CD4-positive, alpha-beta memory T cell (primary cell): ENCODE measurements at regions of chr1 and their contacts with region 1.

Region 1: DNA sequence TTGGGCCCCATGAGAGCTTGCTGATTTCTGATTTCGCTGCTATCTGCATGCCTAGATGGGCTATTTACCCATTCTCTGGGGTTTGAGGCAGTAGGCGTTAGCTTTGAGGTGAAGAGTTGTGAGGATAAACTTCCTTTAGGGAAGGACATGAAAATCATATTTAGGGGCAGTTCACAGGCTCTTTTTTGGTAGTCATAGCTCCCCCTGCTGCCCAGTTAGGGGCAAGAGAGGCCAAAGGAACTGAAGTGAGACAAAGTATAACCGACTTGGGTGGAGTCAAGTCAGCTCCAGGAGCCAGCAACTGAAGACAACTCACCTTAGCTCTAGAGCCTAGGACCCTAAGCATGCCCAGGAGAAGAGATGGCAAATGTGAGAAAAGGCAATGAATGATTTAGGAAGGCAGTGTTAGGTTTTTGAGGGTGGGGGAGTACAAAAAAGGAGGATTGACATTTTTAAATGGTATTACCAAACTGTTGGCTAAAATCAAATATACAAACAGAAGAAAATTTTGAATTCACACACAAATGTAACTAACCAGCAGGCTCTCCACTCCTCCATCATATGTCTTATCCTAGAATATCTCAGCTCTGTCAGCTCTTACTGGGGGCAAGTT is 625.2 kb downstream of the LMO4 start:
- DNase-seq: peak in 4 of 5 donors; percentile 49 to 55 (median 51)
- H3K4me3 ChIP-seq: no peak overlapping the region
- H3K4me3 Mint-ChIP-seq: no peak overlapping the region
- H3K27ac ChIP-seq: no peak overlapping the region
- H3K27ac Mint-ChIP-seq: no peak overlapping the region
- H3K4me1 ChIP-seq: no peaks in the 10 kb centered on the region
- H3K4me1 Mint-ChIP-seq: no peaks in the 10 kb centered on the region
- H3K27me3 ChIP-seq: no peaks in the 10 kb centered on the region
- H3K27me3 Mint-ChIP-seq: peaks cover 13 to 20% of the 10 kb centered on the region in 2 donors

Region 2: DNA sequence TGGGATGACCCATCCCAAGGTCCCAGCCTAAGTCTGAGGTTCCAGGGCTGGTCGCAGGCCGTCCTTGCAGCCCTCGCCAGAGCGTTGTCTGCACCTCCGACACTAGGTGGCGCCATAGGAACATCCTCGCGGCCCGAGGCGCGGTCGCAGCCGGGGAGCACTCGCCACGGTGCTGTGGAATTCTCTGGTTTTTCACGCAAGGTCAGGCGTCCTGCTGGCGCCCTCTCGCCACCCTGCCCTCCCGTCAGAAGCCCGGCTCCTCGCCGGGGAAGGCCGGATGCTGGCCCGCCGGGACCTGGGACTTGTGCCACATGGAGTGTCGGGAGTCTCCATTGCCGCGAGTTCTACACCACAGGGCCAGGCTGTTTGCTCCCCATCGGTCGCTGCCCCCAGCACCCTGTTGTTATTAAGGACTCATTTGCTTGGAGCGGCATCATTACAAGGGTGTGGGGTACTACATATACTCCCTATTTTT is 822.0 kb before region 1 on chr1:
- CTCF ChIA-PET with region 1: interaction called, 4 read pairs
- POLR2A ChIA-PET with region 1: no interaction called
- intact Hi-C with region 1: loop called (anchors 5 kb)
- DNase-seq: peak; percentile 53 to 68 (median 64)
- H3K4me3 ChIP-seq: peak overlapping the region; percentile 14 to 41
- H3K4me3 Mint-ChIP-seq: peak overlapping the region; percentile 82 to 91 (median 86)
- H3K27ac ChIP-seq: no peak overlapping the region
- H3K27ac Mint-ChIP-seq: no peak overlapping the region
- H3K4me1 ChIP-seq: peaks cover 6% of the 10 kb centered on the region
- H3K4me1 Mint-ChIP-seq: peaks cover 3 to 13% (median 9%) of the 10 kb centered on the region in 4 donors
- H3K27me3 ChIP-seq: no peaks in the 10 kb centered on the region
- H3K27me3 Mint-ChIP-seq: peaks cover 20 to 31% of the 10 kb centered on the region in 2 donors

Region 3: DNA sequence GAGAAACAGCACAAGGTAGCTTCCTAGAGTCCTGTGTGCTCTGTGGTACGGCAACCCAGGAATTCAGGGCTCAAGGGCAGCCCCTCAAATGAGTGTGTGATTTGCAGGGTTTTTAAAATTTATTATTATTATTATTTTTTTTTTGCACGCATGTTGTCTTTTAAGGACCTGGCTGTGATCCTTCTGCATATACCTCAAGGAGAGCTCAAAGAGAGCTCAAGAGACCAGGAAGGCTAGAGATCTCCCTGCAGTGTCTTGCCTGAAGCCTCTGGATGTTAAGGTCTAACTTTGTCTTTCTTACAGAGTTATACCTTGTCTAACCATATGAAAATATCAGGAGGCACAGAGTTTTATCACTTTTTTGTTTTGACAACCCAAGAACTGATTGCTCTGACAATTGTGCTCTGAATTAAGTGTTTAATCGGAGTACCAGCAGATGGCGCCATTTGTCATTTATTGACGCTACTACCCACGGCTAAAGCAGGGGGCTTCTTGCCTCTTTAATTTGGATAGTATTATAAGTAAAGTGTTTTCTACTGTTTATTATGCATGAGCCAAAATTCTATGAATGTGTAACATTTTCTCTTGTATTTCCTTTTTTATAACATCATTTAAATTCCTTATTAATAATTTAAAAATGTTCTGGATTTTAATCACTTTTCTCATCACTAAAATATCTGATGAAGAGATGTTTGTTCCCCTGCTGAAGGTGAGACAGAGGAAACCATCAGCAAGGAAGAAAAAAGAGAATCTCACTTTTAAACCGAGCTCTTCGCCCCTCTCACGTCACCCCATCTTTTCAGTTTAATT is 660.9 kb before region 1 on chr1:
- CTCF ChIA-PET with region 1: interaction called, 75 read pairs
- POLR2A ChIA-PET with region 1: no interaction called
- intact Hi-C with region 1: loop called (anchors 1 kb)
- DNase-seq: peak; percentile 42 to 62 (median 52)
- H3K4me3 ChIP-seq: no peak overlapping the region
- H3K4me3 Mint-ChIP-seq: no peak overlapping the region
- H3K27ac ChIP-seq: no peak overlapping the region
- H3K27ac Mint-ChIP-seq: no peak overlapping the region
- H3K4me1 ChIP-seq: no peaks in the 10 kb centered on the region
- H3K4me1 Mint-ChIP-seq: no peaks in the 10 kb centered on the region
- H3K27me3 ChIP-seq: no peaks in the 10 kb centered on the region
- H3K27me3 Mint-ChIP-seq: peaks cover 0 to 10% of the 10 kb centered on the region in 2 donors

Region 4: GRCh38 chr1:87299661-87300060 is 654.2 kb before region 1 on chr1:
- CTCF ChIA-PET with region 1: interaction called, 75 read pairs
- POLR2A ChIA-PET with region 1: no interaction called
- intact Hi-C with region 1: no loop called
- DNase-seq: no peak
- H3K4me3 ChIP-seq: no peak overlapping the region
- H3K4me3 Mint-ChIP-seq: no peak overlapping the region
- H3K27ac ChIP-seq: no peak overlapping the region
- H3K27ac Mint-ChIP-seq: no peak overlapping the region
- H3K4me1 ChIP-seq: no peaks in the 10 kb centered on the region
- H3K4me1 Mint-ChIP-seq: no peaks in the 10 kb centered on the region
- H3K27me3 ChIP-seq: no peaks in the 10 kb centered on the region
- H3K27me3 Mint-ChIP-seq: peaks cover 3 to 4% of the 10 kb centered on the region in 2 donors

Region 5: GRCh38 chr1:87318056-87318650 is 635.7 kb before region 1 on chr1:
- CTCF ChIA-PET with region 1: interaction called, 11 read pairs
- POLR2A ChIA-PET with region 1: no interaction called
- intact Hi-C with region 1: no loop called
- DNase-seq: no peak
- H3K4me3 ChIP-seq: no peak overlapping the region
- H3K4me3 Mint-ChIP-seq: no peak overlapping the region
- H3K27ac ChIP-seq: no peak overlapping the region
- H3K27ac Mint-ChIP-seq: no peak overlapping the region
- H3K4me1 ChIP-seq: no peaks in the 10 kb centered on the region
- H3K4me1 Mint-ChIP-seq: peaks cover 0 to 7% (median 4%) of the 10 kb centered on the region in 4 donors
- H3K27me3 ChIP-seq: no peaks in the 10 kb centered on the region
- H3K27me3 Mint-ChIP-seq: peaks cover 4 to 12% of the 10 kb centered on the region in 2 donors

Region 6: GRCh38 chr1:87965193-87965592 is 11.4 kb after region 1 on chr1:
- CTCF ChIA-PET with region 1: interaction called, 10 read pairs
- POLR2A ChIA-PET with region 1: no interaction called
- intact Hi-C with region 1: no loop called
- DNase-seq: no peak
- H3K4me3 ChIP-seq: no peak overlapping the region
- H3K4me3 Mint-ChIP-seq: no peak overlapping the region
- H3K27ac ChIP-seq: no peak overlapping the region
- H3K27ac Mint-ChIP-seq: no peak overlapping the region
- H3K4me1 ChIP-seq: no peaks in the 10 kb centered on the region
- H3K4me1 Mint-ChIP-seq: no peaks in the 10 kb centered on the region
- H3K27me3 ChIP-seq: no peaks in the 10 kb centered on the region
- H3K27me3 Mint-ChIP-seq: peaks cover 5% of the 10 kb centered on the region in 2 donors

Region 7: GRCh38 chr1:88266051-88266450 is 312.2 kb after region 1 on chr1:
- CTCF ChIA-PET with region 1: no interaction called
- POLR2A ChIA-PET with region 1: no interaction called
- intact Hi-C with region 1: no loop called
- DNase-seq: no peak
- H3K4me3 ChIP-seq: no peak overlapping the region
- H3K4me3 Mint-ChIP-seq: no peak overlapping the region
- H3K27ac ChIP-seq: no peak overlapping the region
- H3K27ac Mint-ChIP-seq: no peak overlapping the region
- H3K4me1 ChIP-seq: no peaks in the 10 kb centered on the region
- H3K4me1 Mint-ChIP-seq: no peaks in the 10 kb centered on the region
- H3K27me3 ChIP-seq: no peaks in the 10 kb centered on the region
- H3K27me3 Mint-ChIP-seq: peaks cover 4 to 5% of the 10 kb centered on the region in 2 donors